Mammary epithelial cell (primary cell): ENCODE measurements at regions of chr11 and their contacts with region 1.

Region 1: DNA sequence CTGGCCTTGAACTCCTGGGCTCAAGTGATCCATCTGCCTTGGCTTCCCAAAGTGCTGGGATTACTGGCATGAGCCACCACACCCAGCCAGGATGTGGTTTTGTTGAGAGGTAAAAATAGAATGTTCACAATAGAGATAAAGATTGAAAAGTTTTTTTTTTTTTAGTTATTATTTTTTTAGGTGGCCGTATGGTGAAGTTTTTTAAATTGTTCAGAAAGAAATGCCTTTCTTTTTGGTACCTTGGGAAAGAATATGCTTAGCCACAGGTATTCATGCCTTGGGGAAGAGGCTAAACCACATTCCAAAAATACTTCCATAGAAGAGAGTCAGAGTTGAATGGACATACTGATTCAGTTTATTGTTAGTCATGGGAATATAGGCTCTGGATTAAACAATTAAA is 143.4 kb downstream of the C11orf91 start:
- DNase-seq: peak; percentile 92
- H3K4me3 ChIP-seq: no peak overlapping the region
- H3K27ac ChIP-seq: peak overlapping the region; percentile 77
- H3K4me1 ChIP-seq: peaks cover 22% of the 10 kb centered on the region
- H3K27me3 ChIP-seq: no peaks in the 10 kb centered on the region
- CTCF ChIP-seq: no peak

Region 2: GRCh38 chr11:33207408-33207985 is 349.7 kb before region 1 on chr11:
- CTCF ChIA-PET with region 1: no interaction called
- dilution Hi-C with region 1: no loop called
- in situ Hi-C with region 1: no loop called
- intact Hi-C with region 1: no loop called
- DNase-seq: no peak
- H3K4me3 ChIP-seq: no peak overlapping the region
- H3K27ac ChIP-seq: no peak overlapping the region
- H3K4me1 ChIP-seq: no peaks in the 10 kb centered on the region
- H3K27me3 ChIP-seq: no peaks in the 10 kb centered on the region
- CTCF ChIP-seq: no peak

Region 3: GRCh38 chr11:33633241-33633901 is 76.2 kb after region 1 on chr11:
- CTCF ChIA-PET with region 1: no interaction called
- dilution Hi-C with region 1: no loop called
- in situ Hi-C with region 1: no loop called
- intact Hi-C with region 1: loop called (anchors 1 kb)
- DNase-seq: peak; percentile 98
- H3K4me3 ChIP-seq: no peak overlapping the region
- H3K27ac ChIP-seq: peak overlapping the region; percentile 97
- H3K4me1 ChIP-seq: peaks cover 61% of the 10 kb centered on the region
- H3K27me3 ChIP-seq: no peaks in the 10 kb centered on the region
- CTCF ChIP-seq: no peak